Heart right ventricle (tissue), 16 donors: ENCODE measurements at regions of chrX and their contacts with region 1.

Region 1: GRCh38 chrX:136953867-136954787 is 73.6 kb upstream of the RBMX start:
- DNase-seq: peak; percentile 22 to 36
- ATAC-seq: peak in 2 of 8 donors; percentile 55 to 61
- H3K4me3 ChIP-seq: no peak overlapping the region
- H3K27ac ChIP-seq: no peak overlapping the region
- H3K4me1 ChIP-seq: no peaks in the 10 kb centered on the region
- H3K27me3 ChIP-seq: no peaks in the 10 kb centered on the region
- CTCF ChIP-seq: peak in 8 of 9 donors; percentile 39 to 67 (median 53)

Region 2: GRCh38 chrX:137051978-137052642 is 98.0 kb after region 1 on chrX:
- intact Hi-C with region 1: loop called in 8 of 10 experiments (anchors 2 to 10 kb)
- DNase-seq: peak; percentile 34 to 65
- ATAC-seq: peak; percentile 72 to 84 (median 80)
- H3K4me3 ChIP-seq: peak overlapping the region in 9 of 10 donors; percentile 26 to 54 (median 47)
- H3K27ac ChIP-seq: no peak overlapping the region
- H3K4me1 ChIP-seq: peaks cover 0 to 12% (median 4%) of the 10 kb centered on the region in 9 donors
- H3K27me3 ChIP-seq: peaks cover 0 to 75% (median 11%) of the 10 kb centered on the region in 7 donors
- CTCF ChIP-seq: peak; percentile 61 to 86 (median 80)

Region 3: GRCh38 chrX:137194164-137194563 is 240.0 kb after region 1 on chrX:
- intact Hi-C with region 1: loop called in 3 of 10 experiments (anchors 10 kb)
- DNase-seq: peak in 1 of 2 donors; percentile 4
- ATAC-seq: no peak
- H3K4me3 ChIP-seq: no peak overlapping the region
- H3K27ac ChIP-seq: no peak overlapping the region
- H3K4me1 ChIP-seq: no peaks in the 10 kb centered on the region
- H3K27me3 ChIP-seq: peaks cover 0 to 39% (median 0%) of the 10 kb centered on the region in 7 donors
- CTCF ChIP-seq: peak in 7 of 9 donors; percentile 29 to 50 (median 38)

Region 4: GRCh38 chrX:138034136-138034535 is 1080.0 kb after region 1 on chrX:
- intact Hi-C with region 1: loop called in 1 of 10 experiments (anchors 10 kb)
- DNase-seq: no peak
- ATAC-seq: no peak
- H3K4me3 ChIP-seq: no peak overlapping the region
- H3K27ac ChIP-seq: no peak overlapping the region
- H3K4me1 ChIP-seq: no peaks in the 10 kb centered on the region
- H3K27me3 ChIP-seq: peaks cover 0 to 7% (median 0%) of the 10 kb centered on the region in 7 donors
- CTCF ChIP-seq: peak in 4 of 9 donors; percentile 5 to 27 (median 18)